ENCODE measurements at regions of chr5 and their contacts with region 1.

Region 1: GRCh38 chr5:7754992-7755596 is 95.8 kb downstream of the CFAP90 start:
- DNase-seq: no peak
- ATAC-seq: peak; percentile 98
- H3K4me3 ChIP-seq: no peak overlapping the region
- H3K27ac ChIP-seq: no peak overlapping the region
- H3K4me1 ChIP-seq: no peaks in the 10 kb centered on the region
- H3K27me3 ChIP-seq: no peaks in the 10 kb centered on the region; a peak in 1 of 4 replicates
- CTCF ChIP-seq: peak; percentile 77 to 96 (median 86)
- EP300 ChIP-seq: no peak
- POLR2A ChIP-seq: no peak
- RAD21 ChIP-seq: peak; percentile 62

Region 2: GRCh38 chr5:6765612-6766525 is 989.2 kb before region 1 on chr5:
- CTCF ChIA-PET with region 1: interaction called, 3 read pairs
- POLR2A ChIA-PET with region 1: no interaction called
- RAD21 ChIA-PET with region 1: no interaction called
- SMC1A ChIA-PET with region 1: no interaction called
- in situ Hi-C with region 1: loop called (anchors 5 kb)
- intact Hi-C with region 1: loop called (anchors 10 kb)
- DNase-seq: peak; percentile 31
- ATAC-seq: peak; percentile 95
- H3K4me3 ChIP-seq: no peak overlapping the region
- H3K27ac ChIP-seq: no peak overlapping the region
- H3K4me1 ChIP-seq: no peaks in the 10 kb centered on the region
- H3K27me3 ChIP-seq: no peaks in the 10 kb centered on the region
- CTCF ChIP-seq: peak; percentile 65 to 88 (median 84)
- EP300 ChIP-seq: no peak
- POLR2A ChIP-seq: no peak
- RAD21 ChIP-seq: peak; percentile 72

Region 3: DNA sequence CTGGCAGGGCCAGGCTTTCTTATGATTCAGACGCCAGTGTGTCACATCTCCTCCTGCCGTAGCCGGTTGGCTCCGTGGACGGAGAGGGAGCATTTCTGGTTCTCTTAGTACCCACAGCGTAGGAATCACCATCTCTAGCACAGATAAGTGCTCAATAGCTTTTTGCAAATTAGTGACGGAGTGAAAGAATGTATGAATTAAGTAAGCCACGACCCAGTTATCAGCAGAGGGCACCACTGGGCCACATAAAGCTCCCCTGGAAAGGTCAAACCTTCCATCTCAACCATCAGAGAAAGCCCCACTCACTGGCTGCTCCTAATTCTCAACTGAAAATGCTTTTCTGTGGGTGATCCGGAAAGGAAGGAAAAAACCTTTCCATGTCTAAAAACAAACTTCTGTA is 676.2 kb before region 1 on chr5:
- CTCF ChIA-PET with region 1: no interaction called
- POLR2A ChIA-PET with region 1: no interaction called
- RAD21 ChIA-PET with region 1: no interaction called
- SMC1A ChIA-PET with region 1: no interaction called
- in situ Hi-C with region 1: no loop called
- intact Hi-C with region 1: loop called (anchors 10 kb)
- DNase-seq: no peak
- ATAC-seq: peak; percentile 36; the same call in 1 of the 3 replicates
- H3K4me3 ChIP-seq: no peak overlapping the region
- H3K27ac ChIP-seq: no peak overlapping the region
- H3K4me1 ChIP-seq: no peaks in the 10 kb centered on the region
- H3K27me3 ChIP-seq: no peaks in the 10 kb centered on the region
- CTCF ChIP-seq: peak in 2 of 3 experiments; percentile 15 to 28; a peak in 2 of 6 replicates
- EP300 ChIP-seq: no peak
- POLR2A ChIP-seq: no peak
- RAD21 ChIP-seq: 0 out of 2 replicates have a peak, but pooled peaks have one; percentile 37

Region 4: GRCh38 chr5:7261049-7261448 is 494.0 kb before region 1 on chr5:
- CTCF ChIA-PET with region 1: interaction called, 9 read pairs
- POLR2A ChIA-PET with region 1: interaction called, 3 read pairs
- RAD21 ChIA-PET with region 1: interaction called, 6 read pairs
- SMC1A ChIA-PET with region 1: interaction called, 4 read pairs
- in situ Hi-C with region 1: no loop called
- intact Hi-C with region 1: loop called (anchors 2 kb)
- DNase-seq: no peak
- ATAC-seq: peak; percentile 29; the same call in 1 of the 3 replicates
- H3K4me3 ChIP-seq: no peak overlapping the region
- H3K27ac ChIP-seq: no peak overlapping the region
- H3K4me1 ChIP-seq: no peaks in the 10 kb centered on the region
- H3K27me3 ChIP-seq: no peaks in the 10 kb centered on the region
- CTCF ChIP-seq: peak; percentile 36 to 46 (median 41); a peak in 3 of 6 replicates
- EP300 ChIP-seq: no peak
- POLR2A ChIP-seq: no peak
- RAD21 ChIP-seq: peak; percentile 69

Region 5: DNA sequence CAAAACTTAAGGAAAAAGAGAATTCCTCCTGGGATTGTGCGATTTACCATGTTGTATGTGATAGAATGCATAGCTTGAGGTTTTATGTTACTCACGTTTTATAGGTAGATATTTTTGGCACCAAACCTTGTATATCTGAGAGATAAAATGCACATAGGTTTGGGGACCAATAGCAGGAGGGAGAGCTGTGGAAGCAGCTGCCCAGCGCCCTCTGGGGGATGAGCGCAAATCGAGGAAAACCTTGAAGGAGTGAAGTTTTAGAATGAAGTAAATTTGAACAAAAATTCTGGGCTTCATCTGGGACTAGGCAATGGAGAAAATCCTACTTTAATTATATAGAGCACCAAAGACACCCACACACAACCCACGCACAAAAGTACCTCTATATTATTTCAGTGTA is 162.2 kb before region 1 on chr5:
- CTCF ChIA-PET with region 1: no interaction called
- POLR2A ChIA-PET with region 1: no interaction called
- RAD21 ChIA-PET with region 1: no interaction called
- SMC1A ChIA-PET with region 1: no interaction called
- in situ Hi-C with region 1: no loop called
- intact Hi-C with region 1: loop called (anchors 10 kb)
- DNase-seq: no peak
- ATAC-seq: peak; percentile 38; the same call in 1 of the 3 replicates
- H3K4me3 ChIP-seq: no peak overlapping the region
- H3K27ac ChIP-seq: no peak overlapping the region
- H3K4me1 ChIP-seq: no peaks in the 10 kb centered on the region
- H3K27me3 ChIP-seq: no peaks in the 10 kb centered on the region
- CTCF ChIP-seq: peak in 2 of 3 experiments; percentile 38 to 41; a peak in 3 of 6 replicates
- EP300 ChIP-seq: no peak
- POLR2A ChIP-seq: no peak
- RAD21 ChIP-seq: 0 out of 2 replicates have a peak, but pooled peaks have one; percentile 21

Region 6: GRCh38 chr5:7947301-7947700 is 192.2 kb after region 1 on chr5:
- CTCF ChIA-PET with region 1: no interaction called
- POLR2A ChIA-PET with region 1: no interaction called
- RAD21 ChIA-PET with region 1: no interaction called
- SMC1A ChIA-PET with region 1: no interaction called
- in situ Hi-C with region 1: no loop called
- intact Hi-C with region 1: no loop called
- DNase-seq: no peak
- ATAC-seq: no peak
- H3K4me3 ChIP-seq: no peak overlapping the region
- H3K27ac ChIP-seq: no peak overlapping the region
- H3K4me1 ChIP-seq: no peaks in the 10 kb centered on the region
- H3K27me3 ChIP-seq: no peaks in the 10 kb centered on the region
- CTCF ChIP-seq: no peak
- EP300 ChIP-seq: no peak
- POLR2A ChIP-seq: no peak
- RAD21 ChIP-seq: no peak

Measured in GM12878 (cell line).